ENCODE measurements at regions of chr15 and their contacts with region 1.

Region 1: DNA sequence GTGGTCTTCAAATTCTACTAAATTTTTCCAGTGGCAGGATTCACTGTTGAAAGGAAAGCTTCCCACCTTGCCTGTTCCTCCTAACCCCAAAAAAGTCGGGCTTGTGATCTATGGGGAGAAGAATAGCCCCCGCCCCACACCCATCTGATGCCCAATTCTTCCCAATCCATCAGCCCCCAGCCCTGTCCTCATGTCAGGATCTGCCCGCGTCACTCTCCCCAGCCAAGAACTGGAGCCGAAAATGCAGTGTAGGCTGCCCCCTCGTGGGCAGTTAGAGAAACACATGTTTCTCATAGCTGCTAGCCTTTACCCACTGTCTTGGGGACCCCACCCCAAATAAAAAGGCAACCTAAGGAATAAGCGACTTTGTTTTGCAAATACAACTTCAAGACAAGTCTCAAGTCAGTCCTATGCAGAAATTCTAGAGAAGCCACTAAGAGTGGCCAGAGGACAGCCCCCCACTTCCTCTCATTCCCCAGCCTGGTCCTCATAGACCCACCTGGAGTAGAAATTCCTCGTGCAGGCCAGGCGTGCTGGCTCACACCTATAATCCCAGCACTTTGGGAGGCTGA is 13.0 kb upstream of the CSK start:
- DNase-seq: peak; percentile 79
- ATAC-seq: peak; percentile 44
- H3K4me3 Mint-ChIP-seq: no peak overlapping the region
- H3K27ac Mint-ChIP-seq: peak overlapping the region; percentile 6
- H3K4me1 Mint-ChIP-seq: peaks cover 16% of the 10 kb centered on the region
- H3K27me3 Mint-ChIP-seq: peaks cover 2% of the 10 kb centered on the region

Region 2: DNA sequence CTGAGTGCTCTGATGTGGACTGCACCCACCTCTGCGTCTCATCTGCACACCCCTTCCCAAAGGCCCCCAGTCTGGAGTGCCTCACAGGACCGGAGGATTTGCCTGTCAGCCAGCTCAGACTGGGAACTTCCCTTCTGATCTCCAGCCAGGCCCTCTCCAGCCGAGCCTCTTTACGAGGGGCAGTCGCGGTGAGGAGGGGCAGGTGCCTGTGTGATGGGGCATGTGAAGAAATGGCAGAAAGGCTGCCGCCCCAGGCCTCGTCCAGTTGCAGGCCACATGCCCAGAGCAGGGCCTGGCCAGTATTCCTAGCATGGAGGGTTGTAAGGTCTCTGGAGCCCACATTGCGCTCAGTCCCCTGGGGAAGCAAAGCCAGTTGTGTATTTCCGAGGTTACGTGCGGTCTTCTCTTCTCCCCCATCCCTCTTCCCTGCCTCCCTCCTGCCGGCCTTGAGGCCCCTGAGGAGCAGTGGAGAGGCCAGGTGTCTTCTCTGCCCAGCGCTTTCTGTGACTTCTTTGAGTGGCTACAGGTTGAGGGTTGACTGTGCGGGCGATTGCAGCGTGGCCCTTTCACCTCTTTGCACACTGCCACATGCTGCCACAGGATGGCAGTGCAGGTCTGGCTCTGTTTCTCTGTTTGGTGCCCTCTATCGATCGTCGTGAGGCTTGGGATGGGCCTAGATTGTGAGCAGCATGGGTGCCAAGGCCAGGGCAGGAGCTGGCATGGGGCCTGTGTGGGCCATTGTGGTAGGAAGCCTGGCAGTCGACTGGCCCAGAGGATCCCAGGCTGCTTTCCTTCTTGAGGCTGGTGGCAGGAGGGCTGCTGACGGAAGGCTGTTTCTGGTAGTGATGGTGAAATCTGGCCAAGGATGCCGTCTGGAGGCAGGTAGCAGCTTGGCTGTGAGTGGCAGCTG is 148.0 kb before region 1 on chr15:
- CTCF ChIA-PET with region 1: interaction called, 35 read pairs
- DNase-seq: peak; percentile 87
- ATAC-seq: peak; percentile 83
- H3K4me3 Mint-ChIP-seq: no peak overlapping the region
- H3K27ac Mint-ChIP-seq: no peak overlapping the region
- H3K4me1 Mint-ChIP-seq: peaks cover 45% of the 10 kb centered on the region
- H3K27me3 Mint-ChIP-seq: no peaks in the 10 kb centered on the region

Region 3: GRCh38 chr15:74664028-74664616 is 104.7 kb before region 1 on chr15:
- CTCF ChIA-PET with region 1: interaction called, 10 read pairs
- DNase-seq: no peak
- ATAC-seq: no peak
- H3K4me3 Mint-ChIP-seq: no peak overlapping the region
- H3K27ac Mint-ChIP-seq: no peak overlapping the region
- H3K4me1 Mint-ChIP-seq: no peaks in the 10 kb centered on the region
- H3K27me3 Mint-ChIP-seq: no peaks in the 10 kb centered on the region

Region 4: DNA sequence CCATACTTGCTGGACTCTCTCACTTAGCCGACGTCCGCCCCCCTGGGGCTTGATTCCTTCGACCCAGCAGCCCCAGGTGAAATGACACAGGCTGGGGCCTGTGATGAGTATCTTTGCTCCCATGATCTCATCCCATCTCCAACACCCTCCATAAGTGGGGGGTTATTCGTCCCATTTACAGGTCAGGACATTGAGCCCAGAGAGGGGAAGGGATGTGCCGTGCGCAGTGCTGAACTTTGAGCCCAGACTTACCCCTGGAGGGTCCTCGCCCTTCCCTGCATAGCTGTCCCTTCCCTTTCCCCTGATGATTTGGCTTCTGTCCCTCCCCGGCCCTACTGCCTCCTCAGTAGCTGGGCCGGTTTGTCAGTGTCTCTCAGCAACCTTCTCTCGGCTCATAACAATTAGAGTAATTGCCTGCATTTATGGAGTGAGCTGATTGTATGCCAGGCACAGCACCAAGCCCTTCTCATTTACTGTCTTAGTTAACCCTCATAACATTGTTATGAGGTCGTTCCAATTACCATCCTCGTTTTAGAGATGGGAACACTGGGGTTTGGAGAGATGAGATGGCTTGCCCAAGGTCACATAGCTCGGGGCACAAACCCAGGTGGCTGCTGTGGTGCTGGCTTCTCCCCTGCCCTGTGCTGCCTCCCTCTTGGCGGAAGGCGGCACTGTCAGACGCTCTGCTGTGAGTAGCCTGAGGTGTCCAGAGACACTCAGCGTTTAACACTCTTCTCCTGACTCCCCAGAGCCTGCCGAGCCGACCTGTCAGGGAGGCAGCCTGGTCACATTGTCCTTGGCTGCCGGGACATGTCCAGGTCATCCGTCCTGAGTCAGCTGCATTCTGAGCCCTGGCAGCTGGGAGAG is 48.2 kb after region 1 on chr15:
- CTCF ChIA-PET with region 1: interaction called, 53 read pairs
- DNase-seq: no peak
- ATAC-seq: no peak
- H3K4me3 Mint-ChIP-seq: no peak overlapping the region
- H3K27ac Mint-ChIP-seq: no peak overlapping the region
- H3K4me1 Mint-ChIP-seq: peaks cover 15% of the 10 kb centered on the region
- H3K27me3 Mint-ChIP-seq: no peaks in the 10 kb centered on the region

Region 5: GRCh38 chr15:74906446-74907162 is 137.7 kb after region 1 on chr15 and contains the start of gene FAM219B:
- CTCF ChIA-PET with region 1: interaction called, 101 read pairs
- DNase-seq: peak; percentile 90
- ATAC-seq: peak; percentile 93
- H3K4me3 Mint-ChIP-seq: peak within 1 kb of the TSS; percentile 93
- H3K27ac Mint-ChIP-seq: peak within 1 kb of the TSS; percentile 95
- H3K4me1 Mint-ChIP-seq: peaks cover 34% of the 10 kb centered on the region
- H3K27me3 Mint-ChIP-seq: no peaks in the 10 kb centered on the region
- total RNA-seq, gene FAM219B: 95.2 to 119 TPM

Measured in activated CD8-positive, alpha-beta memory T cell treated with anti-CD3 and anti-CD28 coated beads, Interleukin-2, amount 10 ng/mL, durations not matched to agents 7 days and 5 days (primary cell).